ENCODE measurements at regions of chr6 and their contacts with region 1.

Region 1: GRCh38 chr6:138109042-138109997 is 2.1 kb upstream of the PERP start:
- DNase-seq: peak; percentile 93
- H3K4me3 Mint-ChIP-seq: no peak overlapping the region
- H3K27ac Mint-ChIP-seq: no peak overlapping the region
- H3K4me1 Mint-ChIP-seq: peaks cover 22% of the 10 kb centered on the region
- H3K27me3 Mint-ChIP-seq: peaks cover 45% of the 10 kb centered on the region

Region 2: GRCh38 chr6:137657351-137658011 is 451.8 kb before region 1 on chr6:
- intact Hi-C with region 1: loop called (anchors 5 kb)
- DNase-seq: peak; percentile 79
- H3K4me3 Mint-ChIP-seq: peak overlapping the region; percentile 4
- H3K27ac Mint-ChIP-seq: peak overlapping the region; percentile 45
- H3K4me1 Mint-ChIP-seq: peaks cover 29% of the 10 kb centered on the region
- H3K27me3 Mint-ChIP-seq: no peaks in the 10 kb centered on the region

Region 3: GRCh38 chr6:137944793-137945498 is 164.4 kb before region 1 on chr6:
- intact Hi-C with region 1: loop called (anchors 5 kb)
- DNase-seq: peak; percentile 77
- H3K4me3 Mint-ChIP-seq: peak overlapping the region; percentile 23
- H3K27ac Mint-ChIP-seq: peak overlapping the region; percentile 81
- H3K4me1 Mint-ChIP-seq: peaks cover 57% of the 10 kb centered on the region
- H3K27me3 Mint-ChIP-seq: no peaks in the 10 kb centered on the region

Region 4: GRCh38 chr6:138161338-138162110 is 52.2 kb after region 1 on chr6 and contains the start of gene ARFGEF3:
- intact Hi-C with region 1: loop called (anchors 5 kb)
- DNase-seq: peak; percentile 83
- H3K4me3 Mint-ChIP-seq: peak within 1 kb of the TSS; percentile 76
- H3K27ac Mint-ChIP-seq: no peak within 1 kb of the TSS
- H3K4me1 Mint-ChIP-seq: peaks cover 14% of the 10 kb centered on the region
- H3K27me3 Mint-ChIP-seq: peaks cover 61% of the 10 kb centered on the region
- total RNA-seq, gene ARFGEF3: 0.47 TPM in 2 replicates